Activated naive CD4-positive, alpha-beta T cell treated with anti-CD3 and anti-CD28 coated beads, Interleukin-2, amount 10 ng/mL, durations not matched to agents 7 days and 5 days (primary cell): ENCODE measurements at regions of chr16 and their contacts with region 1.

Region 1: DNA sequence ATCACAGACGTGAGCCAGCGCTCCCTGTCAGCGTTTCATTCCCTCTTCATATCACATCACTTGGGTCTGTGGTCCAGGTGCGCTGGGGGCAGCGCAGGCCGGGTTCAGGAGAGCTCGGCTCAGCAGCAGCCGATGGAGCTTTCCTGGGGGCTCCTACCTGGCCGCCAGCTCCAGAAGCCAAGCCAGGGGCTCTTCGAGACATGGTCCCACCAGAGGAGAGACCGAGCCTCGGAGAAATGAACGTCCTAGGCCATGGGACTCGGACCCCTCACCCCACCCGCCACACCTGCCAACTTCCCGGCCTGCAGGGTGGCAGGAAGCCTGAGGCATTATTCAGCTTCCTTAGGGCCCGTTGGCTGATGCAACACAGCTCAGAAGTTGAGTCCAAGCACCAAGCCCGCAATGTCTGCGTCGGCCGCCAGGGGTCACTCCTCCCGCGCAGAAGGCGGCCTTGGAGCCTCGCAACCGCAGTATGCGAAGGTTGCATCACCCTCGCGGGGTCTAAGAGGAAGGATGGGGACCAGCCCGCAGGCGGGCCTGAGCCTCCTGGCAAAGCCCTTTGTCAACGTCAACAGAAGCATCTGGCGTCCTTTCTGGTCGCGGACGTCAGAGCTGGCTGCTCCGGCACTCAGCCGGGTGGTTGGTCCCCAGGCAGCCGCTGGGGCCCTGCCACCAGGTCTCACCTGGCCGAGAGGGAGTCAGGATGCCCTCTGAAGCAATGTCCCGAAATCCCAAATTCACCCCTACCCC is 13.2 kb upstream of the KLHDC4 start:
- DNase-seq: peak; percentile 95
- H3K4me3 Mint-ChIP-seq: peak overlapping the region; percentile 48
- H3K27ac Mint-ChIP-seq: peak overlapping the region; percentile 95
- H3K4me1 Mint-ChIP-seq: peaks cover 56% of the 10 kb centered on the region
- H3K27me3 Mint-ChIP-seq: peaks cover 11% of the 10 kb centered on the region

Region 2: GRCh38 chr16:87653234-87653633 is 125.8 kb before region 1 on chr16:
- CTCF ChIA-PET with region 1: no interaction called
- DNase-seq: no peak
- H3K4me3 Mint-ChIP-seq: no peak overlapping the region
- H3K27ac Mint-ChIP-seq: no peak overlapping the region
- H3K4me1 Mint-ChIP-seq: no peaks in the 10 kb centered on the region
- H3K27me3 Mint-ChIP-seq: peaks cover 10% of the 10 kb centered on the region

Region 3: DNA sequence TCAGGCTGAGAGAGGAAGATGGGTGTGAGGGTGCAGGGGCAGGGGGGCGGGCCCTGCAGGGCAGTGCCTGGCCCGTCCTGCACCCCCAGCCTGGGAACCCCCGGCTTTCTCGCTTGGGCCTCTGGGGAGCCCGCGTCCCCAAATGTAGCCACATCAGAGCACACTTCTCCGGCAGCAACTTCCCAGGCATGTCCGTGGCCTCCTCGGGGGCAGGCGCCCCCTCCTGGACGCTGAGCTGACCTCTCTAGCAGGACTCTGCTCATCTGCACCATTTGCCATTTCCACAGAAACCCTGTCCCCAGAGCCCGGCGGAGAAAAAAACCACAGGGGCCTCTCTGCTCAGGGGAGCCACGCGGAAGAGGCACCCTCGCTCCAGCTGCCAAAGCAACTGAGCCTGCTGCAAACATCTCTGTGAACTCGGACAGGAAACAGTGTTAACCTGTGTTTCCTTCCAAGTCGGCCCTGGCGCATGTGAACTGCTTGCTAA is 76.6 kb before region 1 on chr16:
- CTCF ChIA-PET with region 1: no interaction called
- DNase-seq: peak; percentile 67
- H3K4me3 Mint-ChIP-seq: peak overlapping the region; percentile 15
- H3K27ac Mint-ChIP-seq: peak overlapping the region; percentile 92
- H3K4me1 Mint-ChIP-seq: peaks cover 53% of the 10 kb centered on the region
- H3K27me3 Mint-ChIP-seq: no peaks in the 10 kb centered on the region

Region 4: GRCh38 chr16:87791275-87792204 is 12.5 kb after region 1 on chr16:
- CTCF ChIA-PET with region 1: interaction called, 13 read pairs
- DNase-seq: no peak
- H3K4me3 Mint-ChIP-seq: no peak overlapping the region
- H3K27ac Mint-ChIP-seq: no peak overlapping the region
- H3K4me1 Mint-ChIP-seq: no peaks in the 10 kb centered on the region
- H3K27me3 Mint-ChIP-seq: peaks cover 34% of the 10 kb centered on the region

Region 5: DNA sequence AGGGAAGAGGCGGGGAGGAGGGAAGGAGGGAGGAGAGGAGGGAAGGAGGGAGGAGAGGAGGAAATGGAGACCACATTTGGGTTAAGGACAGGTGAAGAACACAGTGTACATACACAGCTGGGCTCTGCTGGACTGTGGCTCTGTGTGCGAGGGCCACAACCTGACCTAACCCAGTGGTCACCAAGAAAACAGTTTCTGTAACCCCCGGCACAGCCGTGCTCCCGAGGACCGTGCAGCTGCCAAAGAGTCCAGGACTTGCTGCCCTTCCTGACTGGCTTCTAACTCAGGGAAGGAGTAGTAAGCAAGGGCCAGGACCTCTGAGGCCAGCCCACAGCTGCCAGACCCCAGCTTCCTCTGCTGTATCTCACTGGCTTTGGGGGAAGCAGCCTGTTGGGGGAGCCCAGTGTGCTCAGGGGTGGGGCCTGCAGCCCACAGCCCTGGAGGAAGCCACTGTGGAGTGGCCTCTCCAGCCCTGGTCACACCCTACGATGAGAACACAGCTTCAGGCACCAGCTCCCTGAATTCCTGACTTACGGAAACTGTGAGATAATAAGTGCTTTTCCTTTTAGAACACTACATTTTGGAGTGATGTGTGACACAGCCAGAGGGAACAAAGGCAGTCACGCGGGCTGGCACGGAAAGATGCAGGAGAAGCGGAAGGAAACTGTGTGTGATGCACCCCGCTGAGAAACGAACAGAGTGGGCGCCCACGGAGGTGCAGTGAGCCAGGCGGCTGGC is 58.0 kb after region 1 on chr16:
- CTCF ChIA-PET with region 1: interaction called, 10 read pairs
- DNase-seq: no peak
- H3K4me3 Mint-ChIP-seq: no peak overlapping the region
- H3K27ac Mint-ChIP-seq: no peak overlapping the region
- H3K4me1 Mint-ChIP-seq: peaks cover 6% of the 10 kb centered on the region
- H3K27me3 Mint-ChIP-seq: no peaks in the 10 kb centered on the region

Region 6: GRCh38 chr16:87877938-87878507 is 99.0 kb after region 1 on chr16:
- CTCF ChIA-PET with region 1: interaction called, 253 read pairs
- DNase-seq: peak; percentile 62
- H3K4me3 Mint-ChIP-seq: no peak overlapping the region
- H3K27ac Mint-ChIP-seq: no peak overlapping the region
- H3K4me1 Mint-ChIP-seq: peaks cover 25% of the 10 kb centered on the region
- H3K27me3 Mint-ChIP-seq: peaks cover 42% of the 10 kb centered on the region

Region 7: DNA sequence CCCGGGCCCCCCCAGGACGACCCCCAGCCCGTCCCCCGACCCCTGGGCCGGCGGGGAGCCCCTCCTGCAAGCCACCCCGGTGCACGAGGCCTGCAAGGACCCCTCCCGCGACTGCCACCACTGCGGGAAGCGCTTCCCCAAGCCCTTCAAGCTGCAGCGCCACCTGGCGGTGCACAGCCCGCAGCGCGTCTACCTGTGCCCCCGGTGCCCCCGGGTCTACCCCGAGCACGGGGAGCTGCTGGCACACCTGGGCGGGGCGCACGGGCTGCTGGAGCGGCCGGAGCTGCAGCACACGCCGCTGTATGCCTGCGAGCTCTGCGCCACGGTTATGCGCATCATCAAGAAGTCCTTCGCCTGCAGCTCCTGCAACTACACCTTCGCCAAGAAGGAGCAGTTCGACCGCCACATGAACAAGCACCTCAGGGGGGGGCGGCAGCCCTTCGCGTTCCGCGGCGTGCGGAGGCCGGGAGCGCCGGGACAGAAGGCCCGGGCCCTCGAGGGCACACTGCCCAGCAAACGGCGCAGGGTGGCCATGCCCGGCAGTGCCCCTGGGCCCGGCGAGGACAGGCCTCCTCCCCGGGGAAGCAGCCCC is 658.5 kb after region 1 on chr16:
- CTCF ChIA-PET with region 1: interaction called, 11 read pairs
- DNase-seq: peak; percentile 76
- H3K4me3 Mint-ChIP-seq: no peak overlapping the region
- H3K27ac Mint-ChIP-seq: no peak overlapping the region
- H3K4me1 Mint-ChIP-seq: no peaks in the 10 kb centered on the region
- H3K27me3 Mint-ChIP-seq: peaks cover 4% of the 10 kb centered on the region